ENCODE measurements at regions of chr2 and their contacts with region 1.

Region 1: GRCh38 chr2:152200562-152201465 is 25.3 kb upstream of the STAM2 start:
- DNase-seq: peak; percentile 33 to 71 (median 48)
- H3K4me3 ChIP-seq: no peak overlapping the region
- H3K27ac ChIP-seq: no peak overlapping the region
- H3K4me1 ChIP-seq: no peaks in the 10 kb centered on the region
- H3K27me3 ChIP-seq: no peaks in the 10 kb centered on the region
- CTCF ChIP-seq: no peak
- EP300 ChIP-seq: no peak
- POLR2A ChIP-seq: no peak

Region 2: GRCh38 chr2:151459358-151459757 is 741.5 kb before region 1 on chr2:
- intact Hi-C with region 1: loop called in 1 of 4 experiments (anchors 5 kb)
- DNase-seq: no peak
- H3K4me3 ChIP-seq: no peak overlapping the region
- H3K27ac ChIP-seq: no peak overlapping the region
- H3K4me1 ChIP-seq: no peaks in the 10 kb centered on the region
- H3K27me3 ChIP-seq: no peaks in the 10 kb centered on the region
- CTCF ChIP-seq: no peak
- EP300 ChIP-seq: no peak
- POLR2A ChIP-seq: no peak

Measured in ovary (tissue), 10 donors.